MCF 10A (cell line): ENCODE measurements at regions of chr11 and their contacts with region 1.

Region 1: GRCh38 chr11:118592616-118593367 is 14.6 kb upstream of the PHLDB1 start:
- DNase-seq: no peak
- H3K4me3 Mint-ChIP-seq: no peak overlapping the region
- H3K27ac Mint-ChIP-seq: no peak overlapping the region
- H3K4me1 Mint-ChIP-seq: no peaks in the 10 kb centered on the region
- H3K27me3 Mint-ChIP-seq: no peaks in the 10 kb centered on the region
- CTCF ChIP-seq: no peak

Region 2: DNA sequence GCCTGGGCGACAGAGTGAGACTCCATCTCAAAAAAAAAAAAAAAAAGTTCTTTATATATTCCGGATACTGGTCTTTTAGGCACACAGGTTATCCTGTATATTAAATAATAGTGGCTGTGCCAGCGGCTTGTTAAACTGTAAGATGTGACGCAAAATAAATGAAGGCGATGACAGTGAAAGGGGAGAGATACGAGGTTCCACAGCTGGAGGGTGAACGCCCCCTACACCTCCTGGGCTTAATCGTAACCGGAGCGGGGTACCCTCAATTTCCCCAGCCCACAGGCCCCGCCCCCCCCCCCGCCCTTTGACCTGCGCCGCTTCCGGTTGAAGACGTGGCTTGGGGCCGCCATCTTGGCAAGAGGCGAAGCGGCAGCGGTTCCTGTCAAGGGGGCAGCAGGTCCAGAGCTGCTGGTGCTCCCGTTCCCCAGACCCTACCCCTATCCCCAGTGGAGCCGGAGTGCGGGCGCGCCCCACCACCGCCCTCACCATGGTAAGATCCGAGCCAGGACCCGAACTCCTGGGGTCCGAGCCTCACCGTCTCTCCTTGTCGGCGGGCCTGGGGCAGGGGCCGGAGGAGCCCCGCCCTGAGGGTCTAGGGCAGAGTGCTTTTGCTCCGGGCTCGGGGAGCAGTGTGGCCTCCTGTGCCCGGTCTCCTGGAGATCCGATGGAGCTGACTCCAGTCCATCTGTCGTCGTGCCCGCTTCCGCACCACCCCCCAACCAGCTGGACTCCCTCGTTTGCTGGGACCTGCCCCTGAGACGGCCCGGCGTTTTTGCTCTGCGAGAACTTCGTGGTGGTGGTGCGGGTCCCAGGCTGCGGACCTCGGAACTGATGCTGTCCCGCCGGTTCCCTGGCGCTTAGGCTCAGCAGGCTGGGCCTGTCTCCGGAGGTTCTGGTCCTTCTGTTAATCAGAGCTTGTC is 20.5 kb before region 1 on chr11 and contains the start of gene ARCN1:
- CTCF ChIA-PET with region 1: interaction called, 4 read pairs
- POLR2A ChIA-PET with region 1: interaction called, 28 read pairs
- intact Hi-C with region 1: no loop called
- DNase-seq: peak; percentile 70
- H3K4me3 Mint-ChIP-seq: peak within 1 kb of the TSS; percentile 84
- H3K27ac Mint-ChIP-seq: peak within 1 kb of the TSS; percentile 81
- H3K4me1 Mint-ChIP-seq: peaks cover 20% of the 10 kb centered on the region
- H3K27me3 Mint-ChIP-seq: no peaks in the 10 kb centered on the region
- CTCF ChIP-seq: no peak
- total RNA-seq, gene ARCN1: 157 and 164 TPM in 2 replicates

Region 3: GRCh38 chr11:118610804-118611795 is 18.3 kb after region 1 on chr11:
- CTCF ChIA-PET with region 1: interaction called, 35 read pairs
- POLR2A ChIA-PET with region 1: interaction called, 6 read pairs
- intact Hi-C with region 1: no loop called
- DNase-seq: peak; percentile 58
- H3K4me3 Mint-ChIP-seq: no peak overlapping the region
- H3K27ac Mint-ChIP-seq: no peak overlapping the region
- H3K4me1 Mint-ChIP-seq: peaks cover 20% of the 10 kb centered on the region
- H3K27me3 Mint-ChIP-seq: no peaks in the 10 kb centered on the region
- CTCF ChIP-seq: peak; percentile 84

Region 4: GRCh38 chr11:118634431-118635236 is 41.8 kb after region 1 on chr11:
- CTCF ChIA-PET with region 1: interaction called, 39 read pairs
- POLR2A ChIA-PET with region 1: interaction called, 12 read pairs
- intact Hi-C with region 1: no loop called
- DNase-seq: peak; percentile 80
- H3K4me3 Mint-ChIP-seq: peak overlapping the region; percentile 67
- H3K27ac Mint-ChIP-seq: peak overlapping the region; percentile 31
- H3K4me1 Mint-ChIP-seq: peaks cover 17% of the 10 kb centered on the region
- H3K27me3 Mint-ChIP-seq: no peaks in the 10 kb centered on the region
- CTCF ChIP-seq: no peak

Region 5: DNA sequence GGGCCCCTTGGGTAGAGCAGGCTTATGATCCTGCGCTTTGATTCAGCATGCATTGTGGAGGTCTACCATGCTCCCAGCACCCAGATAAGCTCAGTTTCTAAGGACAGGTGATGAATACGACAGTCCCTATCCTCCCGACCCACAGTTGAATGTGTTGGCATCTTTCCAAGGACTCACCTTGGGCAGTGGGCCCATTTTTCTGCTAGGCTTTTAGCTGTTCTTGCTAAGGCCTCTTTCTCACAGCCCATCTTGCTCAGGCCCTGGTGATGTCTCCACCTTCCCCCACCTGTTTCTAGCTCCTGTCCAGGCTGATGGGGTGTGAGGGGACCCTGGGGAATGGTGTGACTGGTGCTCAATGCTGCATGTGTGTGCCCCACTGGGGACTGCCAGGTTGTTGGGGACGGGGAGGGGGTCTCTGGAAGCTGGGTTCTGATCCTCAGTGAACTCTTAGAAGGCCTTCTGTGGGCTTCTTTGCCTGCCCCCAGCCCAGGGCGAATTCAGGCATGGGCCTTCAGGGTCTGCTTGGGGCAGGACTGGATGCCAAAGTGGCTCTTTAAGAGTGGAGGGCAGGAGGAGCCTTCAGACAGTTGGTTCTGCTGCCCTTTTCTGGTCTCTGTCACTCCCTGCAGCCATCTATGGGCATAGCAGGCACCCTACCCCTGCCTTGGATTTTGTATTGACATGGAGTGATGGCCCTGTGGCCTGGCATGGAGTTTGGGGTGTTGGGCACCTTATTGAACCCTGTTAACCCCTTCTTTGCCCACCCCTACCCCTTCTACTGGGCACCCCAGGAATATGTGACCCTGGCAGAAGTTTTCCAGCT is 47.8 kb after region 1 on chr11:
- CTCF ChIA-PET with region 1: interaction called, 39 read pairs
- POLR2A ChIA-PET with region 1: no interaction called
- intact Hi-C with region 1: no loop called
- DNase-seq: peak; percentile 54
- H3K4me3 Mint-ChIP-seq: no peak overlapping the region
- H3K27ac Mint-ChIP-seq: no peak overlapping the region
- H3K4me1 Mint-ChIP-seq: peaks cover 9% of the 10 kb centered on the region
- H3K27me3 Mint-ChIP-seq: no peaks in the 10 kb centered on the region
- CTCF ChIP-seq: peak; percentile 50

Region 6: DNA sequence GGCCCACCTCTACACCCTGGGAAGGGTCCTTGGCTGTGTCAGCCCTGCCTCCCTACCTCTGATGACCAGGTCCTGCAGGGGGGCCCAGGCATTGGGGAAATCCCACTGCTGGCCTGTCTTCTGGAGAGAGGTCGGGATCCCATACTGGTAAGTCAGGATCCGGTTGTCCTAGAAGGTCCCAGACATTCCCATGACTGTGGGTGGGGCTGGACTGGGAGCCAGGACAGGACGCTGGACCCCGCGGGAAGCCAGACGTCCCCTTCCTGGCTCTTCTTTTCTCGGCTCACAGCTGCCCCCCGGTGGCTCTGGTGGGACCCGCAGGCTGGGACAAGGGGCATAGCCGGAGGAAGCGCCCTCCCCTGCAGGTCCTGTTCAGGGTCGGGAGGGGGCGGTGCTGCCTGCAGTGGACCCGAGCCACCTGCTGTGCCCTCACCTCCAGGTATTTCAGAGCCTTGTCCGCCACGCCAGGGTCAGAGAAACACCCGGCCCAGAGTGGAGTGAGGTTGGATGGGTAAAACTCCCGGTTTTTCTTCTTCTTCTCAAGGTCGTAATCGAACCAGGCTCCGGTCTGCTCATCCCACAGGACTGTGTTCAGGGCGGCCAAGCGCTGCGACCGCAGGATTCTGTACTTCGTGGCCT is 66.6 kb after region 1 on chr11:
- CTCF ChIA-PET with region 1: interaction called, 38 read pairs
- POLR2A ChIA-PET with region 1: interaction called, 12 read pairs
- intact Hi-C with region 1: loop called (anchors 1 kb)
- DNase-seq: peak; percentile 84
- H3K4me3 Mint-ChIP-seq: no peak overlapping the region
- H3K27ac Mint-ChIP-seq: no peak overlapping the region
- H3K4me1 Mint-ChIP-seq: no peaks in the 10 kb centered on the region
- H3K27me3 Mint-ChIP-seq: no peaks in the 10 kb centered on the region
- CTCF ChIP-seq: peak; percentile 96